ENCODE measurements at regions of chr9 and their contacts with region 1.

Region 1: DNA sequence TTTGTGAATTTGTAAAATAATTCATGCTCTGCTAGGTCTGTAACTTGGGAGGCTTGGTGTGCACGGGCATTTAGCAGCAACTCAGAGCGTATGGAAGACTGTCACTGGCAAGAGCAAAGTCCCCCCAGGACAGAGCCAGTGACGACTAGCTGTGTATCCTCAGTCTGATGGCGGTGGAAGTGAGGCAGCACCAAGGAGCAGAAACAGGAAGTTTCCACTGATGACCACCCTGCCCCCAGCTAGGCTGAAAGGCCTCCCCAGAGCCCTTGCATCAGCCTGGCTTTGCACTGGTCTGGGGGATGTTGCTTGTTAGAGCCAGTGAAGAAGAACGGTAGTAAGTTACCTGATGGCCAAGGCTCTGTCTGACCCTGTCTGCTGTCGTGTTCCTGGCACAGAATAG is 66.8 kb upstream of the ABL1 start:
- DNase-seq: no peak
- H3K27ac ChIP-seq: no peak overlapping the region
- CTCF ChIP-seq: no peak

Region 2: DNA sequence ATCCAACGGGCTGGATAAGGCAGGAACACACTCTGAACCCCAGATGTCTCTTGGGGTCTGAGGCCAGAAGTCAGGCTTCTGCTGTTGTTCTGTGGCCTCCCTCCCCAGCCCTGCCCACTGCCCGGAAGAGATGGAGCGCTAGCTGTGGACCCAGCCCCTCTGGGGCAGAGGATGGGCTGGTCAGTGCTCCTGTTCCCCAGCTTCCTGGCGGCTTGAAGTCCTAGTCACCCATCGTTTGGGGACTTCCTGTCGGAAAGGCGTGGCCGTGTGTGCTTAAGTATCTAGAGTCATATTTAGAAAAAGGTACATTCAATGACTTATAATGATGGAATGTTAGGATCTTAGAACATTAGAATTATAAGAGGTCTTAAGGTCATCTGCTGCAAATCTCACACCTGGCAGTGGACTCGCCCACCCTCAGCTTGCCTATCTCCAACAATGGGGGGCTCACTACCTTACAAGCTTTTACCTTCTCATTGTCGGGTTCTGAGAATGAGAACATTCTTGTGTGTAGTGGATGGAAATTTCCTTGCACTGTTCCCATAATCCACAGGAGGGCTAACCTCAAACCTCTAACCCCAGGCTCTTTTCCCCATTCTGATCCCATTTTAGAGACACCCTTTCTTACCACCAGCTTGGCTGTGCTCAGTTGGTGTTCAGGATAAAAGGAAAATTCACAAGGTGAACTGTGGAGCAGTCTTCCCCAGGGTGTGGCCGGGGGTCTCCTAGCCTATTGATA is 314.7 kb after region 1 on chr9:
- CTCF ChIA-PET with region 1: interaction called, 11 read pairs
- POLR2A ChIA-PET with region 1: no interaction called
- DNase-seq: peak; percentile 48
- H3K27ac ChIP-seq: no peak overlapping the region
- CTCF ChIP-seq: no peak